ENCODE measurements at regions of chr16 and their contacts with region 1.

Region 1: DNA sequence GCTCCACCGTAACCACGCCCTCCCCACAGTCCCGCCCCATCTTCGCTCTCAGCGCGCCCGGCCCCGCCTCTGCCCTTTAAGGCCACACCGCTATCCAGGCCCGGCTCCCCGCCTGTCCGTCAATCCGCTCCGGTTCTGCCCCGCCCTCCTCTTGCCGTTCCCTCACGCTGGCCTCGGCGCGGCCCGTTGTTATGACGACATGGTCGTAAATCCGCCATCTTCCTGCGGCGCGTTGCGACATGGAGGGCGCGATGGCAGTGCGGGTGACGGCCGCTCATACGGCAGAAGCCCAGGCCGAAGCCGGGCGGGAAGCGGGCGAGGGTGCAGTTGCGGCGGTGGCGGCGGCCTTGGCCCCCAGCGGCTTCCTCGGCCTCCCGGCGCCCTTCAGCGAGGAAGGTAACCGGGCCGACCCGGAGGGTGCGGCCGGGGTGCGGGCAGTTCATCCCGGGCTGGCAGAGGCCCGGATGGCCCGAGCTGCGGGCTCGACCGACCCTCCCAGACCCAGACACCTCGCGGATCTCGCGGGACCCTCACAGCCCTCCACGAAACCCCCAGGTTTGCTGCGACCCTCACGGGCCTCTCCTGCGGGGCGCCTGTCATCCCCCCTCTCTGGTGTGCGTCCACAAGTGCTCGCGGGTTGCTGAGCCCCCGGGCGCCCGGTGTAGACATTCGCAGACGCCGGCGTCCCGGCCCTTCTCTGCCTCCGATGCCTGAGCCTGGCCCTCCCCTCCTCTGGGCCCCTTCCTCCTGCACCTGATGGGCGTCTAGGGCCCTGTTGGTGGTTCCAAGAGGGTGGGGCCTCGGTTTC is at the start of gene E4F1:
- DNase-seq: peak; percentile 91 to 99 (median 97)
- ATAC-seq: peak; percentile 99
- H3K4me3 ChIP-seq: peak within 1 kb of the TSS; percentile 81
- H3K4me3 Mint-ChIP-seq: peak within 1 kb of the TSS; percentile 79 to 91 (median 88)
- H3K27ac ChIP-seq: peak within 1 kb of the TSS; percentile 81
- H3K27ac Mint-ChIP-seq: peak within 1 kb of the TSS; percentile 45 to 92 (median 86)
- H3K4me1 ChIP-seq: peaks cover 7 to 9% of the 10 kb centered on the region in 2 donors
- H3K4me1 Mint-ChIP-seq: peaks cover 0 to 25% (median 19%) of the 10 kb centered on the region in 7 donors
- H3K27me3 ChIP-seq: no peaks in the 10 kb centered on the region
- H3K27me3 Mint-ChIP-seq: peaks cover 0 to 3% (median 0%) of the 10 kb centered on the region in 5 donors
- total RNA-seq, gene E4F1: 31.3 to 45.6 (median 36.8) TPM

Region 2: DNA sequence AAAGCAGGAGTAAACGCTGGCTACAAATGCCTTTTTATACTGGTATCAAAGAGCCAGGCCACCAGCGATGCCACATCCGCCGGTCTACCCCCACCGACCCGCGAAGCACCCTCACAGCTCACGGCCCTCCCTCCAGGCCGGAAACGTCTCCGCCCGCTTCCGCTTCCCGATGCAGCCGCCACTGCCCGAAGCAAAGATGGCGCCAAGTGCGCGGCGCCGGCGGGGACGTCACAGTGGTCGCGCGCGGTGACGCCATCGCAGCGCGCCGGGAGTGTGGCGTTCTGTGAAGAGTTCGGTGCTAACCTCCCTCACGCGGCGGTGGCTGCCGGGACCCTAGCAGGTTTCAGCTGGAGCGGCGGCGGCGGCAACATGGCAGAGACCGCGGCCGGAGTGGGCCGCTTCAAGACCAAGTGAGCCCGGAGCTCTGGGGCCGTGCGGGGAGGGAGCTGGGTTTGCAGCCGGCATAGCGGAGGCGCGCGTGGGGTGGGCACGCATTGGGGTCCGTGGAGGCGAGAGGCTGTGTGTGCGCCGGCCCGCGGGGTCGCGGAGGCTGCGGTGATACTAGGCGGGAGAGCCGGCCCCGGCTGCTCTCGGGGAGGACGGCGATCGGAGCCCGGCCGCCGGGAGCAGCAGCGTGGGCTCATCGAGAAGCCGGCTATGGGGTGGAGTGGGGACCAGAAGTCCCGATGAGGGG is 251.6 kb before region 1 on chr16 and contains the start of gene TBL3:
- CTCF ChIA-PET with region 1: no interaction called
- POLR2A ChIA-PET with region 1: no interaction called
- intact Hi-C with region 1: loop called in 1 of 2 experiments (anchors 5 kb)
- DNase-seq: peak; percentile 95 to 99 (median 98)
- ATAC-seq: peak; percentile 97
- H3K4me3 ChIP-seq: peak within 1 kb of the TSS; percentile 81
- H3K4me3 Mint-ChIP-seq: peak within 1 kb of the TSS; percentile 87 to 98 (median 95)
- H3K27ac ChIP-seq: peak within 1 kb of the TSS; percentile 89
- H3K27ac Mint-ChIP-seq: peak within 1 kb of the TSS; percentile 93 to 100 (median 98)
- H3K4me1 ChIP-seq: peaks cover 7 to 18% of the 10 kb centered on the region in 2 donors
- H3K4me1 Mint-ChIP-seq: peaks cover 16 to 27% (median 20%) of the 10 kb centered on the region in 7 donors
- H3K27me3 ChIP-seq: no peaks in the 10 kb centered on the region
- H3K27me3 Mint-ChIP-seq: peaks cover 0 to 4% (median 0%) of the 10 kb centered on the region in 5 donors
- total RNA-seq, gene TBL3: 17.2 to 45.2 (median 27.6) TPM

Region 3: DNA sequence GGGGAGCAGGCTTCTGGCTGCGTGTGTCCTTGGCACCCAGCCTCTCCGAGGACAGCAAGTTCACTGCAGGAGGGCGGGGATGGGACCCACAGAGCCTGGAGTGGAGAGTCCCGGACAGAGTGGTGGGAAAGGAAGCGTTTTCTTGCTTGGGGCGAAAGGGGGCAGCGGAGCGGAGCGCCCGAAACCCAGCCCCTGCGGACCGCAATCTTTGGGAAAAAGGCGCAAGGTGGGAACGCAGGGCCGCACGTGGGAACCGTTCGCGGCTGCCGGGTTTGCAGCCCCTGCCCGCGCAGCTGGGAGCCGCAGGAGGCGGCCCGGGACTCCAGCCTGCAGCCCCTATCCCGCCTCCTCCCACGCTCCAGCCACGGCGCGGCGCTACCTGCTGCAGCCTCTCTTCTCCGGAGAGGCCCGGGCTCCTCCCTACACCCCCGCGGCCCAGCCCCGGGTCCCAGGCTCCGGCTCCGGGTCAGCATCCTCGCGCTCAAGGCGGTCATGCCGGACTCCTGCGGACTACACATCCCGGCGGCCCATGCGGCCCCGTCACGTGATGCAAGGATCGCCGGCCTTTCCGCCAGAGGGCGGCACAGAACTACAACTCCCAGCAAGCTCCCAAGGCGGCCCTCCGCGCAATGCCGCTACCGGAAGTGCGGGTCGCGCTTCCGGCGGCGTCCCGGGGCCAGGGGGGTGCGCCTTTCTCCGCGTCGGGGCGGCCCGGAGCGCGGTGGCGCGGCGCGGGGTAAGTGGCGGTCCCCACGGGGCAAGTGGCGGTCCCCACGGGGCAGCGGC is 176.1 kb before region 1 on chr16 and contains the starts of genes NTHL1 and TSC2:
- CTCF ChIA-PET with region 1: no interaction called
- POLR2A ChIA-PET with region 1: no interaction called
- intact Hi-C with region 1: loop called in 1 of 2 experiments (anchors 1 kb)
- DNase-seq: peak; percentile 81 to 95 (median 87)
- ATAC-seq: peak; percentile 98
- H3K4me3 ChIP-seq: peak within 1 kb of the TSS; percentile 72
- H3K4me3 Mint-ChIP-seq: peak within 1 kb of the TSS; percentile 82 to 97 (median 93)
- H3K27ac ChIP-seq: peak within 1 kb of the TSS; percentile 82
- H3K27ac Mint-ChIP-seq: peak within 1 kb of the TSS in 8 of 9 donors; percentile 57 to 91 (median 82)
- H3K4me1 ChIP-seq: peaks cover 6 to 12% of the 10 kb centered on the region in 2 donors
- H3K4me1 Mint-ChIP-seq: peaks cover 16 to 23% (median 19%) of the 10 kb centered on the region in 7 donors
- H3K27me3 ChIP-seq: no peaks in the 10 kb centered on the region
- H3K27me3 Mint-ChIP-seq: no peaks in the 10 kb centered on the region
- total RNA-seq, gene NTHL1: 4.4 to 27.0 (median 7.5) TPM
- total RNA-seq, gene TSC2: 126 to 155 (median 147) TPM

Region 4: DNA sequence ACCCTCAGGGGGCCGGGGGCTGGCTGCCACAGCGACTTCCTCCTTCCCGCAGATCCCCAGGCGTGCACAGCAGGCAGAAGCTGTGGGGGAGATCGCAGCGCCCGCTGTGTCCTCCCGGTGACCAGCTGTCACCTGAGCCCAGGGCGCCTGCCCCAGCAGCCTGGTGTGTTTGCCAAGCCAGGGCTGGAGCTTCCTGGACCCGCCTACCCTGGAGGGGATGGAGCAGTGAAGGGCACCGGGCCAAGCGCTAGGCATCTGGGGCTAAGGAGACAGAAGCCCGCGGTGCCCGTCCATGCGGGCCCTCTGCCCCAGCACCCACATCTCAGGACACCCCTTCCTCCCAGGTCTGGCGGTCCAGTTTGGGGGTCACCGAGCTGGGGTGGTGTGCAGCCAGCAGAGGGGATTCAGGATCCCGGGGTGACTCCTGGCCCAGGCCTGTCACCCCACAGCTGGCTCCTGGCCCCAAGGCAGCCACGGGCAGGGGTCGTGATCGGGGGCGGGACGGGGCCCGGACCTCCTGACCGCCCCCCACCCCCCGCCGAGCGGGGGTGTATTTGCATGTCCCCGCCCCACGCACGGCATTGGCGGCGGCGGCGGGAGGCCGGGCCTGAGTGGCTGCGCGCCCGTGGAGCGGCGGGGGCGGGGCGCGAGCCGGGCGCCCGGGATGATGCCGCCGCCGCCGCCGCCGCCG is 75.5 kb before region 1 on chr16 and contains the start of gene RAB26:
- CTCF ChIA-PET with region 1: no interaction called
- POLR2A ChIA-PET with region 1: no interaction called
- intact Hi-C with region 1: no loop called
- DNase-seq: peak; percentile 42 to 76 (median 56)
- ATAC-seq: peak; percentile 92
- H3K4me3 ChIP-seq: no peak within 1 kb of the TSS
- H3K4me3 Mint-ChIP-seq: peak within 1 kb of the TSS in 8 of 10 donors; percentile 29 to 67 (median 52)
- H3K27ac ChIP-seq: peak within 1 kb of the TSS; percentile 20
- H3K27ac Mint-ChIP-seq: peak within 1 kb of the TSS in 1 of 9 donors; percentile 48
- H3K4me1 ChIP-seq: peaks cover 13 to 31% of the 10 kb centered on the region in 2 donors
- H3K4me1 Mint-ChIP-seq: peaks cover 0 to 16% (median 11%) of the 10 kb centered on the region in 7 donors
- H3K27me3 ChIP-seq: no peaks in the 10 kb centered on the region
- H3K27me3 Mint-ChIP-seq: peaks cover 0 to 3% (median 0%) of the 10 kb centered on the region in 5 donors
- total RNA-seq, gene RAB26: 0.86 TPM in 1 of 5 experiments, not detected in the others

Region 5: DNA sequence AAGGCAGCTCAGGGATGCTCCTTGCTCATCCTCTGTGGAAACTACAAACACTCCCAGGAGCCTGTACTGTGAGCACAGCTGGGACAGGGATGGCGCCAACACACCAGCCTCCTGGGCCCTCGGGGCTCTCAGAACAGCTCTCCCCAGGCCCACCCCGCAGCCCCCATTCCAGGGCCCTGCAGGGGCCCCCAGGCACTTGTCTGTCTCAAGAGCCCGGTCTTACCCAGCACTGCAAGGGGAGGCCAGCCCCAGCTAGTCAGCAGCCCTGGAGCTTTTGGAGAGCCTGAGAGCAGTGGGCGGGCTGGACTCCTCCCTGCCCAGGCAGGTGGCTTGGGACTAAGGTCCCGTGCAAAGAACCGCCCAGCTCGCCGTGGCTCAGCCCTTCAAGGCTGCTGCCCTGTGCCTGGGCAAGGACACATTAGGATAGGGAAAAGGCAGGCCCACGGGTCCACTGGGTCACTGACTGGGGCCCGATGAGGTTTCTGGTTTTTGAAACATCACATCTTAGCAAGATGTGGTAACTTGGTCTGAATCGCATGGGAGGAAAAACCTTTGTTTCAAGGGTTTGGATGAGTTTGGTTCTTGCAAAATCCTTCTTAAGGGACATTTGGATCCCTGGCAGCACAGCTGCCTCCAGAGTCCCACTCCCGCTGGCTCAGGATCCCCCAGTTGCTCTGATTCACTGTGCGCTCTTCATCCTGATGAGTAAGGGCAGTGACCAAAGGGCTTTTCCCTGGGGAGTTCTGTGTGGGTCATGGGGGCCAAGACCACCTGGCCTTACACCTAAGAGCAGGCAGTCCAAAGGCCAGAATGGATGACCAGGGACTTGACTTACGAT is 15.5 kb after region 1 on chr16:
- CTCF ChIA-PET with region 1: no interaction called
- POLR2A ChIA-PET with region 1: no interaction called
- intact Hi-C with region 1: no loop called
- DNase-seq: no peak
- ATAC-seq: no peak
- H3K4me3 ChIP-seq: no peak overlapping the region
- H3K4me3 Mint-ChIP-seq: no peak overlapping the region
- H3K27ac ChIP-seq: no peak overlapping the region
- H3K27ac Mint-ChIP-seq: no peak overlapping the region
- H3K4me1 ChIP-seq: no peaks in the 10 kb centered on the region
- H3K4me1 Mint-ChIP-seq: peaks cover 0 to 11% (median 0%) of the 10 kb centered on the region in 7 donors
- H3K27me3 ChIP-seq: no peaks in the 10 kb centered on the region
- H3K27me3 Mint-ChIP-seq: no peaks in the 10 kb centered on the region

Region 6: GRCh38 chr16:2251483-2252240 is 28.1 kb after region 1 on chr16 and contains the start of gene ECI1:
- CTCF ChIA-PET with region 1: no interaction called
- POLR2A ChIA-PET with region 1: interaction called, 4 read pairs
- intact Hi-C with region 1: loop called (anchors 1 to 2 kb)
- DNase-seq: peak; percentile 48 to 90 (median 62)
- ATAC-seq: peak; percentile 91
- H3K4me3 ChIP-seq: peak within 1 kb of the TSS; percentile 62
- H3K4me3 Mint-ChIP-seq: peak within 1 kb of the TSS; percentile 85 to 94 (median 89)
- H3K27ac ChIP-seq: peak within 1 kb of the TSS; percentile 76
- H3K27ac Mint-ChIP-seq: peak within 1 kb of the TSS; percentile 85 to 94 (median 91)
- H3K4me1 ChIP-seq: peaks cover 7% of the 10 kb centered on the region in 2 donors
- H3K4me1 Mint-ChIP-seq: peaks cover 0 to 12% (median 7%) of the 10 kb centered on the region in 7 donors
- H3K27me3 ChIP-seq: no peaks in the 10 kb centered on the region
- H3K27me3 Mint-ChIP-seq: no peaks in the 10 kb centered on the region
- total RNA-seq, gene ECI1: 19.9 to 29.3 (median 26.8) TPM

Region 7: DNA sequence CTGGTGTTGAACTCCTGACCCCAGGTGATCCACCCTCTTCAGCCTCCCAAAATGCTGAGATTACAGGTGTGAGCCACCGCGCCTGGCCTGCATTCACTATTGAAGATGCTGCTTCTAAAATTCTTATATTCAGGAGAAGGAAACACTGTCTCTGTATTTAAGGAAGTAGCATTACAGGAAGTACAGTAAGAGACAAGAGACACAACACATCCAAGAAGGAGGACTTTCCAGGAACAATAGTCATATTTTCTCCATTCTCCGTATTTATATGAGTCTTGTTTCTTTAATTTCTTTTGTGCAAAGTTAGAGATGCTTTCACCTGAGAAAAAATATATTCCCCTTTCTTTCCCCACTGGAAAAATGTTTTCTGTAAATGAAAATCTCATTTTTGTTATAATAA is 135.2 kb after region 1 on chr16:
- CTCF ChIA-PET with region 1: no interaction called
- POLR2A ChIA-PET with region 1: no interaction called
- intact Hi-C with region 1: no loop called
- DNase-seq: no peak
- ATAC-seq: no peak
- H3K4me3 ChIP-seq: no peak overlapping the region
- H3K4me3 Mint-ChIP-seq: no peak overlapping the region
- H3K27ac ChIP-seq: no peak overlapping the region
- H3K27ac Mint-ChIP-seq: no peak overlapping the region
- H3K4me1 ChIP-seq: no peaks in the 10 kb centered on the region
- H3K4me1 Mint-ChIP-seq: peaks cover 0 to 2% (median 0%) of the 10 kb centered on the region in 7 donors
- H3K27me3 ChIP-seq: peaks cover 0 to 4% of the 10 kb centered on the region in 2 donors
- H3K27me3 Mint-ChIP-seq: peaks cover 29 to 53% (median 42%) of the 10 kb centered on the region in 5 donors

Region 8: DNA sequence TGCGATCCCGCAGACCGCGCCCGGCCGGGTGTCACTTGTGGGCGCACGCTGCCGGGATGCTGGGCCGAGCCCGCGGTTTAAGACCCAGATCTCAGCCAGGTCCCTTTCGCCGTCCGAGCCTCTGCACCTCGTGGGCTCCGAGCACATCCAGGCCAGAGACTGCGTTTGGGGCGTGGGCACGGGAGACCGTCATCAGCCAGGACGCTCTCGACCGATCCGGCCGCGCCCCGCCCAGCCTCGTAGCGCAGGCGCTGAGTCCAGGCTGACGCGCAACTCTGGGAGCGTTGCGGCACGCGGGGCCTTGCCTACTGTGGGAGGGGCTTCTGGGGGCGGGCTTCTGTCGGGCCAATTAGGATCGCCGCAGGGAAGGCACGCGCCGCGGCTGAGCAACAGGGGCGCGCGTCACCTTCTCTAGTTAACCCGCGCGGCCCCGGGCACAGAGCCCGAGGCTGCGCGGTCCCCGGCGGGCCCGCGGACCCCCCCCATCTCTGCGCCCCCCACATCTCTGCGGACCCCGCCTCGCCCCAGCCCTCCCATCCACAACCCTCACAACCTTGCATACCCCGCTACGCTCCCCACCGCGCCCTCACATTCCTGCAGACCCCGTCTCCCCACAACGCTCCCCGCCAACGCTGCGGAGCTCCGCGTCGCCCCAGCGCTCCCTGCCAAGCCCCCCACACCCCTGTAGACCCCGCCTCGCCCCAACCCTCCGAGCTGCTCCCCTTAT is 308.4 kb after region 1 on chr16:
- CTCF ChIA-PET with region 1: no interaction called
- POLR2A ChIA-PET with region 1: no interaction called
- intact Hi-C with region 1: loop called in 1 of 2 experiments (anchors 5 kb)
- DNase-seq: peak; percentile 94 to 97 (median 96)
- ATAC-seq: peak; percentile 93
- H3K4me3 ChIP-seq: peak overlapping the region; percentile 71
- H3K4me3 Mint-ChIP-seq: peak overlapping the region; percentile 84 to 100 (median 96)
- H3K27ac ChIP-seq: peak overlapping the region; percentile 93
- H3K27ac Mint-ChIP-seq: peak overlapping the region; percentile 96 to 100 (median 98)
- H3K4me1 ChIP-seq: peaks cover 5 to 7% of the 10 kb centered on the region in 2 donors
- H3K4me1 Mint-ChIP-seq: peaks cover 0 to 31% (median 20%) of the 10 kb centered on the region in 7 donors
- H3K27me3 ChIP-seq: no peaks in the 10 kb centered on the region
- H3K27me3 Mint-ChIP-seq: no peaks in the 10 kb centered on the region

Measured in naive thymus-derived CD4-positive, alpha-beta T cell (primary cell).